Panc1 (cell line): ENCODE measurements at regions of chr10 and their contacts with region 1.

Region 1: GRCh38 chr10:3467052-3467951 is 294.7 kb upstream of the PITRM1 start:
- DNase-seq: peak; percentile 95
- ATAC-seq: peak; percentile 80
- H3K4me3 ChIP-seq: peak overlapping the region; percentile 36 to 51
- H3K27ac ChIP-seq: peak overlapping the region; percentile 92
- H3K4me1 ChIP-seq: peaks cover 49% of the 10 kb centered on the region
- H3K27me3 ChIP-seq: no peaks in the 10 kb centered on the region
- CTCF ChIP-seq: peak; percentile 80

Region 2: GRCh38 chr10:3395458-3395861 is 71.8 kb before region 1 on chr10:
- CTCF ChIA-PET with region 1: no interaction called
- POLR2A ChIA-PET with region 1: no interaction called
- in situ Hi-C with region 1: no loop called
- intact Hi-C with region 1: no loop called
- DNase-seq: no peak
- ATAC-seq: no peak
- H3K4me3 ChIP-seq: no peak overlapping the region
- H3K27ac ChIP-seq: no peak overlapping the region
- H3K4me1 ChIP-seq: no peaks in the 10 kb centered on the region; the same call in 1 of the 2 replicates
- H3K27me3 ChIP-seq: no peaks in the 10 kb centered on the region
- CTCF ChIP-seq: no peak

Region 3: DNA sequence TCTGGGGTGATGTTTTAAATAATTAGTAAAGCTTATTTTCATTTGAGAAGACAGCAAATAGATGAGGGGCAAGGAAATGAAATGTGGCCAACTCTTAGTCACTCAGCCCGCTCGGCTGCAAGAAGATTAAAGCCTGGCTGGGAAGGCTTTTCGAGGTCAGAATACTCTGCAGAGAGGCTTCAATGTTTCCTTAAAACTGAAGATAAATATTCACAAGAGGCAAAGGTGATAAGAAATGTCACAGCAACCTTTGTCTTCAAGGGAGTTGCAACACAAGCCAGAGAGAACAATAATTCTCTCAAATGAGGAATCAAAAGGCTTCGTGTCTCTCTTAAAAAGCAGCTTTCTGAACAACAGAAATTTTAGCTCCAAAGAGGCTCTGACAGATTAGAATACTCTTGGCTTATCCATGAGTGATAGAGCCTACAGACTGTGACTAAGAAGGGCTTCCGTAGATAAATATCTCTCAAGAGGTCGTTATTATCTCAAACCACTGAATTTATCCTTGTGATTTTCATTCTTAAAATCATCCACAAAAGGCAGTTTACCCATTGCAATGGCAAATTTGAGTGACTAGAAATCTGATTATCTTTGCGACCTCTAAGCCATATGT is 225.2 kb after region 1 on chr10:
- CTCF ChIA-PET with region 1: no interaction called
- POLR2A ChIA-PET with region 1: interaction called, 15 read pairs
- in situ Hi-C with region 1: no loop called
- intact Hi-C with region 1: no loop called
- DNase-seq: no peak
- ATAC-seq: no peak
- H3K4me3 ChIP-seq: no peak overlapping the region
- H3K27ac ChIP-seq: no peak overlapping the region
- H3K4me1 ChIP-seq: no peaks in the 10 kb centered on the region
- H3K27me3 ChIP-seq: no peaks in the 10 kb centered on the region
- CTCF ChIP-seq: no peak

Region 4: DNA sequence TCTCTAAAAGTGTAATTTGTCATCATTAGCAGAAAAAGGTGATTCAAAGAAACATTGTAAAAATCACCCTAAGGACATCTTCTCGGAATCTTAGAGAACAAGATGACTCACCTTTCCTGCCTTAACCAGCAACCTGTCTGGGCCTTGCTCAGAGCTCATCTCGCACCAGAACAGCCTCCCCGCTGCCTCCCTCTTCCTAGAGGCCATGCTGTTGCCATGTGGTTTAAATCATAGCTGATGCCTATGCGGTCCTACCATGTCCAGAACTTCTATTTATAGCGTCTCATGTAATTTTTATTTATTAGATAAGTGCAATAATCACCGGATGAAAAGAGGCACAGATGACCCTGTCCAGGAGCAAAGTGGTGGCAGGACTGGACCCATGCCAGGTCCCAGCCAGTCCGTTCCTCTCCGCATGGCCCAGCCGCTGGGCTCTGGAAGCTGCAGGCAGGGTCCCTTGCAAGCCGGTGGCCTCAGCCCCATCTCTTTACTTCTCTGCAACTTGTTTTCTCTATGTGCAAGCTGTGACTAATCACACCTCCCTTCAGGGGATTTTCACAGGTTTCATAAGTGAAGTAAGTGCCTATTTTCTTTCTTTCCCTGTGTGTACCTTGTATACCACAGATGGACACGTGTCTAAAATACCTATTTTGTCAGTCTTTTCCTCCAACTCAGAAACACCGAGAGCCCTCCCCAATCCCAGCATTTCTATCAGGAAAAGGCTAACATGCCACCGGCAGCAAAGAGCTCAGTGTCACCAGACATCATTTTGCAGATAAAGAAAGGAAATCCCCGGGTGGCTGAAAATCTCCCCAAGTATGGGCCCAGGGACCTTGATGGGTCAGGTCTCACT is 290.6 kb after region 1 on chr10:
- CTCF ChIA-PET with region 1: no interaction called
- POLR2A ChIA-PET with region 1: no interaction called
- in situ Hi-C with region 1: no loop called
- intact Hi-C with region 1: loop called (anchors 5 kb)
- DNase-seq: peak; percentile 53
- ATAC-seq: peak; percentile 54
- H3K4me3 ChIP-seq: no peak overlapping the region
- H3K27ac ChIP-seq: peak overlapping the region; percentile 88
- H3K4me1 ChIP-seq: peaks cover 54% of the 10 kb centered on the region
- H3K27me3 ChIP-seq: no peaks in the 10 kb centered on the region
- CTCF ChIP-seq: no peak